Activated CD4-positive, alpha-beta memory T cell treated with anti-CD3 and anti-CD28 coated beads, Interleukin-2, amount 10 ng/mL, durations not matched to agents 7 days and 5 days (primary cell): ENCODE measurements at regions of chr10 and their contacts with region 1.

Region 1: DNA sequence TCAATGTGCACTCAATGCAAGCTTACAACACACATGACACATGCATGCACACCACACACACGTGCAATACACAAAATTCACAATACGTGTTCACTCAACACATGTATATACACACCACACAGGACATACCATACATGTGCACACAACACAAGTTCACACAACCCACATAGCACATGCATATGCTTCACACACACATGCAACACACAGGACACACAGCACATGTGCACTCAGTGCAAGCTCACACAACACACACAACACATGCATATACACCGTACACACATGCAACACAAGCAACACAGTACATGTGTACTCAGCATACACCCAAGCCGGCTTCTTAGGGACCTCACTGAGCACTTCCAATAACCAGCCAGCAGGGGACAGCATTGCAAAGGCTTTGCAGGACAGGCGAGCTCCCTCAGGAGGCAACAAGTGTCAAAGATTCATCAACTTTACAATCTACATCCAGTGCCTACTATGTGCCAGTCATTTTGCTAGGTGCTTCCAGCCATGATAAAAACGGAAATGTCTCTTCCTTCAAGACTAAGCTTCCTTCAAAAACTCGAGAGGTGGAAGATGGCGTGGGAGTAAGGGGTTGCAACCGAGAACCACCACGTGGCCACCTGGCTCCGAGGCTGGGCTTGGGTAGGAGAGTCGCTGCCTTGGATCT is 61.1 kb downstream of the JCAD start:
- DNase-seq: peak; percentile 81
- H3K4me3 Mint-ChIP-seq: no peak overlapping the region
- H3K27ac Mint-ChIP-seq: no peak overlapping the region
- H3K4me1 Mint-ChIP-seq: peaks cover 8% of the 10 kb centered on the region
- H3K27me3 Mint-ChIP-seq: peaks cover 48% of the 10 kb centered on the region

Region 2: DNA sequence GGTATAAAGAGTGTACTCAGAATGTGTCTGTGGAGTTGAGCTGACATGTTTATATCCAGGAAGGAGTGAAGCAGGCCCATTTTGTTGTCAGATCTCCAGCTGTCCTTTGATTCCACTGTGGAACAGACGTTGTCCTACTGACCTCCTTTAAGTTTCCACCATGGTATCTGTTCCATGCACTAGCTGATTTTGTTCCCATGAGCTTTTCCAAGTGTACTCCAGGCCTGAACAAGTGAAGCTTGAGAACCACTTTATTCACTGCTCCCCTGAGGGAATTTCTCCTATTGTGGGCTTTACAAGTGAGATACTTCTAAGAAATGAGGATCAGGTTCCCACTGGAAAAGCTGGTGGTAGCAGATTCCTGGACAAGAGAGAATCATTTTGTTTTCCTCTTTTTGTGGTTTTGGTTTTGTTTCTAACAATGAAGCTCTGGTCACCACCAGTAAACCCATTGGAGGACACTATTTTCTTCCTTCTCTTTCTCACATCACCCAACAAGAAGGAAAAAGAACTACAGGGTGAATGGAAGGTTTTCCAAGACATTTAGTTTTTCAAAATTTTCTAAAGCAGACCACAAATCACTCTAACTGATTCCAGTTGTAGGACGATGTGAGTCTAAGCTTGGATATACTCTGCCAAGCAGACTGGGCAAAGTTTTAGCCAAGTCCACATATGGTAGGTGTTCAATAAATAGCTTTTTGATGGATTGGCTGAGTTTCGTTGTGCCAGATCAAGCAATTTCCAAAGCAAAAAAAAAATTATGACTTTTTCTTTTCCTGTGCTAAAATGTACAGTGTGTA is 83.1 kb before region 1 on chr10:
- CTCF ChIA-PET with region 1: no interaction called
- POLR2A ChIA-PET with region 1: no interaction called
- DNase-seq: no peak
- H3K4me3 Mint-ChIP-seq: no peak overlapping the region
- H3K27ac Mint-ChIP-seq: no peak overlapping the region
- H3K4me1 Mint-ChIP-seq: no peaks in the 10 kb centered on the region
- H3K27me3 Mint-ChIP-seq: peaks cover 20% of the 10 kb centered on the region

Region 3: GRCh38 chr10:30013757-30014156 is 15.5 kb after region 1 on chr10:
- CTCF ChIA-PET with region 1: interaction called, 13 read pairs
- POLR2A ChIA-PET with region 1: interaction called, 3 read pairs
- DNase-seq: no peak
- H3K4me3 Mint-ChIP-seq: no peak overlapping the region
- H3K27ac Mint-ChIP-seq: no peak overlapping the region
- H3K4me1 Mint-ChIP-seq: peaks cover 27% of the 10 kb centered on the region
- H3K27me3 Mint-ChIP-seq: peaks cover 29% of the 10 kb centered on the region

Region 4: DNA sequence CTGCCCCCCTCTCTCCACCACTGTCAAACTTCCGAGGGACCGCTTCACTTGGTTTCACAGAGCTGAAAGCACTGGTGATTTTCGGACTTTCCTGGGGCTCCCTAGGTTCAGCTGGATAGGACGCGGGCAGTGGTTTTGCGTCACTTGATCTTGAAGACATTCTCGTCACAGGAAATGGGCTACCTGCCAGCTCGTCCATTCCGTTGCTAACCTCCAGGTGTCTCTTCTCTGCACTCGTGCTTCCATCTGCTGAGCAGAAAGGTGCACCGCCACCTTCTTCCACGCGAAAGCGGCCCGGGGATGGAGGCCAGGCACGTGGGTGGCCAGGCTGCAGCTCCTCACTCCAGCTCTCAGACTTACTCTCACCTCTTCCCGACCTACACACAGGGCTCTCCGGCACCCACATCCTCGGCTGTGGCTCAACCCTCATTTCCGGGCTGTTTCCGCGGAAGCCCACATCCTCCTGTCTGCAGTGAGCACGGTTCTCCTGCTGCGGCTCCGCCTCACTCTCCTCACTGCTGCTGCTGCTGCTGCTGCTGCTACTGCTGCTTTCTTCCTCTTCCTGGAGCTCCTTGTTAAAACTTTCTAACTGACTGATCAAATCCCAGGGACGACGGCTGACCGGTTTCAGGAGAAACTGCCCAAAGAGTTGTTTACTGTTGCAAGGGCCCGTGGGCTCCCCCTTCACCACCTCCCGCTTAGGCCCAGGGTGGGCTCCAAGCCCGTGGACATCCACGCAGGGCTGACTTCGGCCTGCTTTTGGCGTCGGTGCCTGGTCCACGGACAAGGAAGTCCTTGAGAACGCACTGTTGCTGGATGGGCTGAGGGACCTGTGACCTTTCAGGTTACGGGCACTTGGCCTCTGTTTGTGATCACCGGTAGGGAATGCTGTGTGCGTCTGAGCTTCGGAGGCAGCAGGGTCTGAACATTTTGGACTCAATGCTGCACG is 29.1 kb after region 1 on chr10:
- CTCF ChIA-PET with region 1: interaction called, 10 read pairs
- POLR2A ChIA-PET with region 1: interaction called, 6 read pairs
- DNase-seq: peak; percentile 97
- H3K4me3 Mint-ChIP-seq: peak overlapping the region; percentile 64
- H3K27ac Mint-ChIP-seq: peak overlapping the region; percentile 87
- H3K4me1 Mint-ChIP-seq: peaks cover 47% of the 10 kb centered on the region
- H3K27me3 Mint-ChIP-seq: peaks cover 50% of the 10 kb centered on the region

Region 5: DNA sequence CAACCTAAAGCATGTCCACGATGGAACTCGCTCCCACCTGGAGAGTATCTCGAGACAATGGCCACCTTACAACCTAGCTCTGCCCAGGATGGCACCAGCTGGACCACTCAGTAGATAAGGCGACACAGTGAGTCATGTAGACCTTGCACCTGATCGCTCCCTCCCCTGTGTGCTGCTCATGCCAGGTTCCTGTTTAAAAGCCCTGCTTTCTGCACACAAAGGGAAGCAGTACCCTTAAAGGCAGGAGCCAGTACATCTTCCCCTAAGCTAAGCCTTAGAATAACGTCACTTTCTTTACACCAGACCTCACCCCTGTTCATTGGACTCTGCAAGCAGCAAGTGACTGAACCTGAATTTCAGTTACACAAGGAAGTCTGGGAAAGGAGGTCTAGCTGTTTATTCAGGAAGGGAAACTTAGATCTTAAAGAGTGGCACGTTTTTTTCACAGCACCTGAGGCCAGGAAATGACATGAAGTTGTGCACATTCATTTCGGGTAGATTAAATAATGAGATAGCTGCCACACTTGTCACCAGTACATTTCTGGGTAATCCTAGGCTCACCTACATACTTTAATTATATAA is 232.9 kb after region 1 on chr10:
- CTCF ChIA-PET with region 1: interaction called, 19 read pairs
- POLR2A ChIA-PET with region 1: no interaction called
- DNase-seq: peak; percentile 26
- H3K4me3 Mint-ChIP-seq: no peak overlapping the region
- H3K27ac Mint-ChIP-seq: peak overlapping the region; percentile 33
- H3K4me1 Mint-ChIP-seq: peaks cover 26% of the 10 kb centered on the region
- H3K27me3 Mint-ChIP-seq: peaks cover 13% of the 10 kb centered on the region

Region 6: GRCh38 chr10:30241422-30242110 is 243.3 kb after region 1 on chr10:
- CTCF ChIA-PET with region 1: interaction called, 98 read pairs
- POLR2A ChIA-PET with region 1: no interaction called
- DNase-seq: no peak
- H3K4me3 Mint-ChIP-seq: no peak overlapping the region
- H3K27ac Mint-ChIP-seq: no peak overlapping the region
- H3K4me1 Mint-ChIP-seq: peaks cover 6% of the 10 kb centered on the region
- H3K27me3 Mint-ChIP-seq: peaks cover 8% of the 10 kb centered on the region

Region 7: DNA sequence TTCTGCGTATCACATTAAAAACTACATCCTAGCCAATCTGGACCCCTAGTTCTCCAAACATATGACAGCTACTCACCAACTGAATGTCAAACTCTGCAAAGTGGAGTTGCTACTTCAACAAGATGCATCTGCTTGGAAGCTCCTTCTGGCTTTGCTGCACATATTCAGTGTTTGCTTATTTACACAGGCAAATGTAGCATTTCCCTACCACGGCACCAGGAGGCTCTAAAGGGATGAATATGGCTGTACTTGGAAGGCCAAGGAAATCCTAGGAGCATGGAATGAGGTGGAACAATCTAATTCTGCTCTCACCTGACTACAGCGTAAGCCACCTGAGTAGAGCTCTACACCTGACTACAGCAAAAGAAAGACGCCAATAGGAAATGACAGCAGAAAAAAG is 311.1 kb after region 1 on chr10:
- CTCF ChIA-PET with region 1: interaction called, 10 read pairs
- POLR2A ChIA-PET with region 1: no interaction called
- DNase-seq: no peak
- H3K4me3 Mint-ChIP-seq: no peak overlapping the region
- H3K27ac Mint-ChIP-seq: no peak overlapping the region
- H3K4me1 Mint-ChIP-seq: no peaks in the 10 kb centered on the region
- H3K27me3 Mint-ChIP-seq: no peaks in the 10 kb centered on the region